Caco-2 (cell line): ENCODE measurements at regions of chr2 and their contacts with region 1.

Region 1: GRCh38 chr2:227884511-227884947 is 13.1 kb downstream of the DAW1 start:
- DNase-seq: peak; percentile 68 to 79
- H3K4me3 ChIP-seq: no peak overlapping the region
- H3K4me3 Mint-ChIP-seq: no peak overlapping the region
- H3K27ac Mint-ChIP-seq: no peak overlapping the region
- H3K4me1 ChIP-seq: peaks cover 15% of the 10 kb centered on the region
- H3K4me1 Mint-ChIP-seq: peaks cover 12% of the 10 kb centered on the region
- H3K27me3 ChIP-seq: no peaks in the 10 kb centered on the region
- H3K27me3 Mint-ChIP-seq: no peaks in the 10 kb centered on the region
- CTCF ChIP-seq: peak; percentile 65 to 77

Region 2: DNA sequence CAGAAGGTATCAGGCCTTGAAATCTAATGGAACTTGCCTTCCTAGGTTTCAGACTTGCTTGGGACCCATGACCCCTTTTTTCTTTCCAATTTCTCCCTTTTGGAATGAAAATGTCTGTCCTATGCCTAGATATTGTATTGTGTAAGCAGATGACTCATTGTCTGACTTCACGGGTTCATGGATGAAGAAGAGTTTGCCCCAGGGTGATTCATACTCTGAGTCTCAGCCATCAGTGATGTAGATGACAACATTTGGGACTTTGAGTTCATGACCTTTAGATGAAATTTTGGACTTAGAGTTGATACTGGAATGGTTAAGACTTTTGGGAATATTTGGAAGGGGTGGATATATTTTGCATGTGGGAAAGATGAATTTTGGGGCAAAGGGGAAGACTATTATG is 229.1 kb before region 1 on chr2:
- CTCF ChIA-PET with region 1: interaction called, 3 read pairs
- POLR2A ChIA-PET with region 1: no interaction called
- intact Hi-C with region 1: loop called (anchors 5 kb)
- DNase-seq: no peak
- H3K4me3 ChIP-seq: no peak overlapping the region
- H3K4me3 Mint-ChIP-seq: no peak overlapping the region
- H3K27ac Mint-ChIP-seq: peak overlapping the region; percentile 37
- H3K4me1 ChIP-seq: peaks cover 11% of the 10 kb centered on the region
- H3K4me1 Mint-ChIP-seq: peaks cover 12% of the 10 kb centered on the region
- H3K27me3 ChIP-seq: no peaks in the 10 kb centered on the region
- H3K27me3 Mint-ChIP-seq: no peaks in the 10 kb centered on the region
- CTCF ChIP-seq: no peak

Region 3: DNA sequence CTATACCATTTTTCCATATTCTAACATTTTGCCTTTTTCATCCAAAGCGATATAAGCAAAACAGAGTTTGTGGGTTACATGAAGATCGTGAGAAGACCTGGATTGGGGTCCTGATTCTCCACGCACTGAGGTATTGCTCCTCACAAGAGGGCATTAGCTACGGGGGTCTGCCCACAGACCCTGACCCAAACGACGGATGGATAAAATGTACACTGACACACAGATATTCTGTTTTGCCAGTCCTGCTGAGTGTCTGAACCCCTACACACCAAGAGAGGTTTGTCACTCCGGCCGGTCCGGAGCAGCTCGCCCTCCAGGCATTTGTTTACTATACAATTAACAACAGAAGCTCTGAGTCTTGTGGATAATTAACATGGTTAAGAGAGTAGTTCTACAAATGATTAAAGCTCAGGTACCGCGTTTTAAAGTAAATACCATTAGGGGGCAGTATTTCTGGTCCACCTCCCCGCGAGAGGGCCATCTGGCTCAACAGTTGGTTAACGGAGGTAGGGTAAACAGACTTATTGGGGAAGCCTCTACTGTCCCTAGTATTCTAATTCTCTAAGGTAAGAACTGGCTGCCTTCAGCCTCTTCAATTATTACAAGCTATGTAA is 110.4 kb before region 1 on chr2:
- CTCF ChIA-PET with region 1: no interaction called
- POLR2A ChIA-PET with region 1: no interaction called
- intact Hi-C with region 1: loop called (anchors 2 kb)
- DNase-seq: no peak
- H3K4me3 ChIP-seq: no peak overlapping the region
- H3K4me3 Mint-ChIP-seq: no peak overlapping the region
- H3K27ac Mint-ChIP-seq: no peak overlapping the region
- H3K4me1 ChIP-seq: no peaks in the 10 kb centered on the region
- H3K4me1 Mint-ChIP-seq: no peaks in the 10 kb centered on the region
- H3K27me3 ChIP-seq: no peaks in the 10 kb centered on the region
- H3K27me3 Mint-ChIP-seq: no peaks in the 10 kb centered on the region
- CTCF ChIP-seq: no peak

Region 4: GRCh38 chr2:227862227-227862740 is 22.2 kb before region 1 on chr2:
- CTCF ChIA-PET with region 1: no interaction called
- POLR2A ChIA-PET with region 1: no interaction called
- intact Hi-C with region 1: loop called (anchors 1 kb)
- DNase-seq: peak in 1 of 2 experiments; percentile 23
- H3K4me3 ChIP-seq: no peak overlapping the region
- H3K4me3 Mint-ChIP-seq: no peak overlapping the region
- H3K27ac Mint-ChIP-seq: no peak overlapping the region
- H3K4me1 ChIP-seq: peaks cover 16% of the 10 kb centered on the region
- H3K4me1 Mint-ChIP-seq: peaks cover 19% of the 10 kb centered on the region
- H3K27me3 ChIP-seq: no peaks in the 10 kb centered on the region
- H3K27me3 Mint-ChIP-seq: no peaks in the 10 kb centered on the region
- CTCF ChIP-seq: peak; percentile 30 to 47

Region 5: DNA sequence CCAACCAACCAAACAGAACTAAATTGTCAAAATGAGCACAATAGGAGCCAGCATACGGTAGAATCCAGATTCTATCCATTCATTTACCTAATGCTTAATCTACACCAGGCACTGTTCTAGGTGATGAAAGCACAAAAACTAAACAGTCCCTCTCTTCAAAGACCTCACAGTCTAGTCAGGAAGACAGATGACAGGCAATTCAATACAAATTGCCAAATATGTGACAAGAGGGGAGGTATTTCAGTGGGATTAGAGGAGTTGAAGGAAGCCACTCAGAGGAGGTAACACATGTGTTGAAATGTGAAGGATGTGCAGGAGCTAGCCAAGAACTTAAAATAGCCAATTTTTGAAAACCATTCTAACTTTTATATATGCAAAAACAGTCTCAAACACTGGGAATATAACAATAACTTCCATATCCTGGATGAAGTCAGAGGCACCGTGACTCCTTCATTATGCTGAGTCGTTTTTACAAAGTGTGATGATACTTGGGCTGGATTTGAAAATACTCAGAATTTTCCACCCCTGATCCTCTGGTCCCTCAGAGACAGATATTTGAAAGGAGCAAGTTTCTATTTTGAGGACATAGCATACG is 1181.7 kb after region 1 on chr2:
- CTCF ChIA-PET with region 1: no interaction called
- POLR2A ChIA-PET with region 1: no interaction called
- intact Hi-C with region 1: no loop called
- DNase-seq: no peak
- H3K4me3 ChIP-seq: no peak overlapping the region
- H3K4me3 Mint-ChIP-seq: no peak overlapping the region
- H3K27ac Mint-ChIP-seq: no peak overlapping the region
- H3K4me1 ChIP-seq: no peaks in the 10 kb centered on the region
- H3K4me1 Mint-ChIP-seq: no peaks in the 10 kb centered on the region
- H3K27me3 ChIP-seq: no peaks in the 10 kb centered on the region
- H3K27me3 Mint-ChIP-seq: no peaks in the 10 kb centered on the region
- CTCF ChIP-seq: no peak